ENCODE measurements at regions of chr3 and their contacts with region 1.

Region 1: GRCh38 chr3:61771991-61772390 is 210.6 kb downstream of the PTPRG start:
- DNase-seq: no peak
- ATAC-seq: no peak
- H3K4me3 Mint-ChIP-seq: no peak overlapping the region
- H3K27ac Mint-ChIP-seq: no peak overlapping the region
- H3K4me1 Mint-ChIP-seq: peaks cover 79% of the 10 kb centered on the region
- H3K27me3 Mint-ChIP-seq: no peaks in the 10 kb centered on the region
- CTCF ChIP-seq: no peak

Region 2: DNA sequence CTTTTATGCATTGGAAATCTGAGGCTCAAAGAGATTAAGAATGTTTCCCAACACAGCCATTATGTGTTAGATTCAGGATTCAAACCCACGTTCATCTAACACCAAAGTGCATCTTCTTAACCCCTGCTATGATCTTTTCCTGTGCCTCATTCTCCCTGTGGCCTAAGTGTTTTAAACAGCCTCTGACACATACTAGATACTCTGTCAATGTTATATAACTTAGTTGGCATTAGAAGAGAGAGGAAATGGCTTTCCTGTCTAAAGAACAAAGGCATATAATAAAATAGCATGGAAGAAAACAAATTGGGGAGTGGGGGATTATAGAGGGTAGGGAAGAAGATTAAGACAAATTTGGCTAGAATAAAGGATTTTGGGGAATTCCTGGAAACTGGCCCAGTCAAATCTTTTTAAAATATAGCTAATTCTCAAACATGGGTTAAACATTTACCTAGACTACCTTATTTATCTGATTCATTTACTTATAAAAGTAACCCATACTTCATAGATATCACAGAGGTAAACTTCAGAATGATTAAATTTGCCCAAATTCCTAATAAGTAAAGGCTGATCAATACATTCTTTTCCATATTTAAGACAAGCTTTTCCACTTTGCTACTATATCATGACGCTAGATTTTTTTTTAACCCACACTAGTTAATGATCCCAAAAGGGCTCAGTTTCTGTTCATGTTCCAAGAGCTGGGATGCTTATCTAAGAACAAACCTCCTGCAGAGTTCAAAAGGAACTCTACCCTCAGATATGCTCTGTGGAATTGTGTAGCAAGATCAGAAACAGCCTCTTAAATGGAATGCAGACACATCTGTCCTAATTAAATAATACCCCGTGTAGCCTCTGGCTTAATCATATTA is 333.5 kb before region 1 on chr3:
- CTCF ChIA-PET with region 1: no interaction called
- POLR2A ChIA-PET with region 1: no interaction called
- DNase-seq: no peak
- ATAC-seq: no peak
- H3K4me3 Mint-ChIP-seq: no peak overlapping the region
- H3K27ac Mint-ChIP-seq: no peak overlapping the region
- H3K4me1 Mint-ChIP-seq: no peaks in the 10 kb centered on the region
- H3K27me3 Mint-ChIP-seq: peaks cover 5% of the 10 kb centered on the region
- CTCF ChIP-seq: no peak

Region 3: GRCh38 chr3:62039586-62039985 is 267.6 kb after region 1 on chr3:
- CTCF ChIA-PET with region 1: no interaction called
- POLR2A ChIA-PET with region 1: interaction called, 10 read pairs
- DNase-seq: no peak
- ATAC-seq: no peak
- H3K4me3 Mint-ChIP-seq: no peak overlapping the region
- H3K27ac Mint-ChIP-seq: no peak overlapping the region
- H3K4me1 Mint-ChIP-seq: peaks cover 39% of the 10 kb centered on the region
- H3K27me3 Mint-ChIP-seq: no peaks in the 10 kb centered on the region
- CTCF ChIP-seq: no peak